ENCODE measurements at regions of chr2 and their contacts with region 1.

Region 1: DNA sequence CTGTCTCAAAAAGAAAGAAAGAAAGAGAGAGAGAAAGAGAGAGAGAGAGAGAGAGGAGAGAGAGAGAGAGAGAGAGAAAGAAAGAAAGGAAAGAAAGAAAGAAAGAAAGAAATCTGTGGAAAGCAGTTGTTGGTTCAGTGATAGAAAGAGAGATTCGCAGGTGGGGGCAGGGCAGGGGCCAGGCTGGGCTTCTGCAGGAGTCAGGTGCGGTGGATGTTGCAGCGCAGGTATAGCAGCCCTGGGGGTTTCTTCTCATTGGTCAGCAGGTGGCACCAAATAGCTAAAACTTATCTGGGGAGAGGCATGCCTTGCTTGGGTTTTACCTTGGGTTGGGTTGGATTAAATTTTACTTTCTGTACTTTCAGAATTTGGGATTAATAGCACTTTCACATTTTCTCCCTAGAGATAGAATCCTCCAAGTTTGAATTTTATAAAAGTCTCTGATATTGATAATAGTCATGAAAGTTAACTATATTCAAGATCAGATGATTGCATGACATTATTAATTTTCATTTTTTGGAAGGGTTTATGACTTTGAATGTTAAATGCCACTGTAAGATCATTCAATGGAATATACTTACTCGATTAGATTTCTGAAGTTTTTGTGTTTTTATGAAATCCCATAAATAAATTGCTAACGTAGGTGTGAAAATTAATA is 66.6 kb downstream of the SPTBN1 start:
- DNase-seq: no peak

Region 2: GRCh38 chr2:54545702-54546450 is 23.1 kb after region 1 on chr2:
- intact Hi-C with region 1: no loop called
- DNase-seq: no peak

Region 3: GRCh38 chr2:54652540-54652939 is 129.8 kb after region 1 on chr2:
- intact Hi-C with region 1: loop called (anchors 5 kb)
- DNase-seq: no peak

Measured in cardiac septum (tissue), 1 donor.